Calu3 (cell line): ENCODE measurements at regions of chr17 and their contacts with region 1.

Region 1: DNA sequence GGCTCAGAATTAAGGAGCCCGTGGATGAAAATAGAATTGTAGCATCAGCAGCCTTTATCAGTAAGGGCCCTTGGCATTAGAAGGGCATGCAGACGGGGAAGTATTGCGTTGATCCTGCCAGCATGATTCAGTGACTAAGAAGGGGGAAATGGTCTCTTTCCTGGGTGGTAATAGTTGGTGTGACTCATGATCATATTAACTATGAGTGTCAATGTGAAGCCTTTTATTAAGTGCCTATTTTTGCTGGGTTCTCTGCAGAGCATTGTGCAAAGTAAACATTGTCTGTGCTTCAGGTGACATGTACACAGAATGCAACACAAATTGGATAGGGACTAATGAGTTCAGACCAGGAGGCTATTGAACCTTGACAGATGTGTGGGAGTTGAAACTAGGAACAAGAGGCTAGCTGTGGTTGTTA is 24.5 kb downstream of the RCVRN start:
- DNase-seq: peak; percentile 50
- H3K4me3 Mint-ChIP-seq: peak overlapping the region; percentile 50
- H3K27ac Mint-ChIP-seq: peak overlapping the region; percentile 94
- H3K4me1 Mint-ChIP-seq: peaks cover 33% of the 10 kb centered on the region
- H3K27me3 Mint-ChIP-seq: no peaks in the 10 kb centered on the region
- CTCF ChIP-seq: no peak

Region 2: GRCh38 chr17:8522577-8522976 is 1358.0 kb before region 1 on chr17:
- CTCF ChIA-PET with region 1: no interaction called
- intact Hi-C with region 1: no loop called
- DNase-seq: no peak
- H3K4me3 Mint-ChIP-seq: no peak overlapping the region
- H3K27ac Mint-ChIP-seq: no peak overlapping the region
- H3K4me1 Mint-ChIP-seq: no peaks in the 10 kb centered on the region
- H3K27me3 Mint-ChIP-seq: no peaks in the 10 kb centered on the region
- CTCF ChIP-seq: no peak

Region 3: GRCh38 chr17:9054126-9054975 is 826.2 kb before region 1 on chr17:
- CTCF ChIA-PET with region 1: no interaction called
- intact Hi-C with region 1: no loop called
- DNase-seq: no peak
- H3K4me3 Mint-ChIP-seq: no peak overlapping the region
- H3K27ac Mint-ChIP-seq: no peak overlapping the region
- H3K4me1 Mint-ChIP-seq: peaks cover 7% of the 10 kb centered on the region
- H3K27me3 Mint-ChIP-seq: peaks cover 11% of the 10 kb centered on the region
- CTCF ChIP-seq: no peak

Region 4: DNA sequence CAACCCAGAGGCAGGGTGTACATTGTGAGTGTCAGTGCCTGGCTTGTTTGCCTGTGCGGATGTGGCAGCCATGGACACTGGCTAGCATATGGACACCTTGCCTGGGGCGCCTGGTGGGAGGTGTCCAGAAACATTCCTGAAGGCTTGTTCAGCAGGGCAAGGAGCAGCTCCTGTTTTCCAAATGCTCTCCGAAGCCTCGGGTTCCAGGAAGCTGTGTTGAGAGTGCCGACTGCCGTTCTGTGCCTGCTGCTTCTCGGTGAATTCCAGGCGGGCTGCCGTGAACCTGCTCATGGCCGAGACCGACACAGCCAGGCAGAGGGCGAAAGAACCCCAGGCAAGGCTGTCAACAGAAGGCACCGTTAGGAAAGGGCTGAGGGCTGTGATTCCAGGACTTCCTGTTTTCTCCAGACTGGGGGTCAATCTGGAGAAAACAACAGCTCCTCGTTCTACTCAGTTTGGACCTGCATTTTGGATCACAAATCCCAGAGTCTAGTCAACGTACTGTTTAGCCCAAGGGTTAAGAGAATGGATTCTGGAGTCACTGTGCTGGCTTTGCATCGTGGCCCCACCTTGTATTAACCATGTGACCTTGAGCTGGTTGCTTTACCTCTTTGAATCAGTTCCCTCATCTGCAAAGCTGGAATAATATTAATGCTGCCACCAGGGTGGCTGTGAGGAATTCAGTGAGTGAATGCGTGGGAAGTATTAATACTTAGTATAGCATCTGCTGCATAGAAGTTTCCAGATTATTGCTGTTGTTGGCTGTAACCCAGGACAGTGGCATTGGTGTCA is 78.1 kb before region 1 on chr17:
- CTCF ChIA-PET with region 1: no interaction called
- intact Hi-C with region 1: no loop called
- DNase-seq: peak; percentile 57
- H3K4me3 Mint-ChIP-seq: no peak overlapping the region
- H3K27ac Mint-ChIP-seq: peak overlapping the region; percentile 26
- H3K4me1 Mint-ChIP-seq: peaks cover 8% of the 10 kb centered on the region
- H3K27me3 Mint-ChIP-seq: no peaks in the 10 kb centered on the region
- CTCF ChIP-seq: no peak

Region 5: GRCh38 chr17:9837551-9838471 is 42.8 kb before region 1 on chr17:
- CTCF ChIA-PET with region 1: no interaction called
- intact Hi-C with region 1: loop called (anchors 5 kb)
- DNase-seq: no peak
- H3K4me3 Mint-ChIP-seq: no peak overlapping the region
- H3K27ac Mint-ChIP-seq: peak overlapping the region; percentile 13
- H3K4me1 Mint-ChIP-seq: peaks cover 40% of the 10 kb centered on the region
- H3K27me3 Mint-ChIP-seq: no peaks in the 10 kb centered on the region
- CTCF ChIP-seq: no peak